MCF 10A (cell line): ENCODE measurements at regions of chr12 and their contacts with region 1.

Region 1: GRCh38 chr12:95217377-95218149 is at the starts of genes FGD6 and VEZT:
- DNase-seq: peak; percentile 99
- H3K4me3 Mint-ChIP-seq: peak within 1 kb of the TSS; percentile 84
- H3K27ac Mint-ChIP-seq: peak within 1 kb of the TSS; percentile 90
- H3K4me1 Mint-ChIP-seq: peaks cover 21% of the 10 kb centered on the region
- H3K27me3 Mint-ChIP-seq: no peaks in the 10 kb centered on the region
- CTCF ChIP-seq: peak; percentile 65
- total RNA-seq, gene FGD6: 17.2 and 25.1 TPM in 2 replicates
- total RNA-seq, gene VEZT: 88.1 and 107 TPM in 2 replicates

Region 2: DNA sequence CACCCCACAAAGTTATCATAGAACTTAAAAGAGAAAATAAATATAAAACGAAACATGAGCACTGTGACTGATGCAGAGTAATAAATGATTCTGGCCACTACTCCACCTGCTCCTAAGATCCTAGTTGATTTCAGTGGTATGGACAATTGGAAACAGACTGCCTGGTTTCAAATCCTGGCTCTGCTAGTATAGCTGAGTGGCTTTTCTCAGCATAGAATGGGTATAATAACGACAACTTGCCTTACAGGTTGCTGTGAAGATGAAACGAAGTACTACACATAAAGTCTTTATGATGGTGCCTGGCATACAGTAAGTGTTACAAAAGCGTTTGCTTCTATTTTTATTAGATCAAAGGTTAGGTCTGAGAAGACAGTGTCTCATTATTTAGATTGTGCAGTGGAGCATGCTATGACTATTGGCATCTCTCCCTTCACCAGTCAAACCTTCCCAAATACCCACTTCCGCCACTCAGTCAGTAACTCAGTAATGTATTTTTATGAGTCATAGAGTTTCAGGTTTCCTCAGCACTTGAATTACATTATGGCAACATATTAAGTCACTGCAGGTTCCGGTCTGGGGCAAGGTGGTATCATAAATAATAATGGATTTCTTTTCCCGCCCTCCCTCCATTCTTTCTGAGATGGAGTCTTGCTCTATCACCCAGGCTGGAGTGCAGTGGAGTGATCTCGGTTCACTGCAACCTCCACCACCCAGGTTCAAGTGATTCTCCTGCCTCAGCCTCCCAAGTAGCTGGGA is 114.5 kb before region 1 on chr12:
- CTCF ChIA-PET with region 1: interaction called, 3 read pairs
- POLR2A ChIA-PET with region 1: interaction called, 3 read pairs
- intact Hi-C with region 1: loop called (anchors 5 kb)
- DNase-seq: peak; percentile 95
- H3K4me3 Mint-ChIP-seq: peak overlapping the region; percentile 12
- H3K27ac Mint-ChIP-seq: peak overlapping the region; percentile 36
- H3K4me1 Mint-ChIP-seq: peaks cover 17% of the 10 kb centered on the region
- H3K27me3 Mint-ChIP-seq: no peaks in the 10 kb centered on the region
- CTCF ChIP-seq: no peak

Region 3: DNA sequence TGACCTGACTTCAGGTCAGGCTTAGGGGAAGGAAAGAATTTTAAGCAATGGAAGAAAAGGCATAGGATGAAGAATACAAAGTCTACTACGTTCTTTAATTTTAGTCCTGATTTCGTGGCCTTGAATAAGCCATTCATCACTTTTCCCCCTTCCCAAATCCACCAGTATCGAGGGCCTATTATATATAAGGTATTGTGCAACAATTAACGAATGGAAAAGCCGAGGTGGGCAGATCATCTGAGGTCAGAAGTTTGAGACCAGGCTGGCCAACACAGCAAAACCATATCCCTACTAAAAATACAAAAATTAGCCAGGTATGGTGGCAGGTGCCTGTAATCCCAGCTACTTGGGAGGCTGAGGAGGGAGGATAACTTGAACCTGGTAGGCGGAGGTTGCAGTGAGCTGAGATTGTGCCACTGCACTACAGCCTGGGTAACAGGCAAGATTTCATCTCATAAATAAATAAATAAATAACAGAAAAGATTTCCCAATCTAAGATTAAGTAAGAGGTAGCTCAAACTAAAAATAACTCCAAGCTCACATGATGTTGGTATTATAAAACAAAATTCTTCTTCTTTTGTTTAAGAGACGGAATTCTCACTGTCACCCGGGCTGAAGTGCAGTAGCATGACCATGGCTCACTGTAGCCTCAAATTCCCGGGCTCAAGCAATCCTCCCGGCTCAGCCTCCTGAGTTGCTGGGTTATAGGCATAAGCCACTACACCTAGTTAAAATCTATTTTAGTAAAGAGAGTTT is 85.8 kb before region 1 on chr12:
- CTCF ChIA-PET with region 1: interaction called, 6 read pairs
- POLR2A ChIA-PET with region 1: interaction called, 17 read pairs
- intact Hi-C with region 1: no loop called
- DNase-seq: no peak
- H3K4me3 Mint-ChIP-seq: no peak overlapping the region
- H3K27ac Mint-ChIP-seq: no peak overlapping the region
- H3K4me1 Mint-ChIP-seq: no peaks in the 10 kb centered on the region
- H3K27me3 Mint-ChIP-seq: no peaks in the 10 kb centered on the region
- CTCF ChIP-seq: no peak

Region 4: GRCh38 chr12:95198914-95199313 is 18.6 kb before region 1 on chr12:
- CTCF ChIA-PET with region 1: interaction called, 46 read pairs
- POLR2A ChIA-PET with region 1: interaction called, 1,056 read pairs
- intact Hi-C with region 1: loop called (anchors 1 kb)
- DNase-seq: peak; percentile 45
- H3K4me3 Mint-ChIP-seq: peak overlapping the region; percentile 48
- H3K27ac Mint-ChIP-seq: peak overlapping the region; percentile 98
- H3K4me1 Mint-ChIP-seq: peaks cover 32% of the 10 kb centered on the region
- H3K27me3 Mint-ChIP-seq: no peaks in the 10 kb centered on the region
- CTCF ChIP-seq: no peak

Region 5: DNA sequence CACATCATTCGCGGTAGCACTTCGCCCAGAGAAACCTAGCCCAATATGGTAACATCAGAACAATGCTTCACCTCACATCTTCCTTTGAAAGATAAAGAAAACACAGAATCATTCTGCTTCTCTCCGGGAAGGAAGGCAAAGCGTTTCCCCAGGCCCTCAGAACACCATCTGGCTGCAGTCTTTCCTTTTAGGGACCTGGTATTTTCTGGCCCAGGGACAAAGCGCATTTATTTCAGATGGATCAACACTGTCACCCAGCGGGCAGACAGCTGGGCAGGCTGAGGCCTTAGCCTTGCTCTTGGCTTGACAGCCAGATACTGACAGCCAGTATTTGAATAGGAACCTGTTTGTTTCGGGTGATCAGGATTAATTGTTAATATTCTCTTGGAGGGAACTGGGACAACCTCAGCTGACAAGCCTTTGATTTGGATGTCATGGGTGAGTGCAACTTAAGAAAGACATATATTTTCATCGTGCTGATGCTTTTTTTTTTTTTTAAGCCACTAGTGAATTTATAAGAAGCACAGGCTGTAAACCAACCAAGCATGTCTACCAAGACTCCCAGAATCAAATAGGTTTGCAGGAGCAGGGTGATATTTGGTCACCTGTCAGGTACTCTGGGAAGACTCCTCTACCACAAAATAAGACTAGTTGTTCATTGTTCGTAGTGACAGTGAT is 119.0 kb after region 1 on chr12:
- CTCF ChIA-PET with region 1: no interaction called
- POLR2A ChIA-PET with region 1: interaction called, 3 read pairs
- intact Hi-C with region 1: loop called (anchors 5 kb)
- DNase-seq: peak; percentile 57
- H3K4me3 Mint-ChIP-seq: no peak overlapping the region
- H3K27ac Mint-ChIP-seq: no peak overlapping the region
- H3K4me1 Mint-ChIP-seq: peaks cover 6% of the 10 kb centered on the region
- H3K27me3 Mint-ChIP-seq: no peaks in the 10 kb centered on the region
- CTCF ChIP-seq: peak; percentile 71